Posterior vena cava (tissue), 2 donors: ENCODE measurements at regions of chr11 and their contacts with region 1.

Region 1: DNA sequence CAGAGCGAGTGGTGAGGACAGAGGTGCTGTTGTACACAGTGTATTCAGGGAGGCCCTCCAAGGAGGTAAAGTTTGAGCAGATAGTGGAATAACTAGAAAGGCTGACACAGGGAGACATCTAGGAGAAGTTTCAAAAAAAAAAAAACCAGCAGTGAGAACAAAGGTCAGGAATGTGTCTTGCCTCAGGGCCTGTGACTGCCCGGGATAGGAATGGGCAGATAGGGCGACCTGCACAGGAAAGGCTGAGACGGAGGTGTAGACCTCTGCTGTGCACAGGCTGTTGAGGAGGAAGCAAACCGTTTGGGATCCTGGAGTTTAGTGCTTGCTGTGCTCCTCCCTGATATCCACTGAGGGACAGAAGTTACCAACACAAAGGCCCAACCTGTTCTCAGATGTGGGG is 406.5 kb upstream of the B3GAT1 start:
- DNase-seq: no peak

Region 2: GRCh38 chr11:134762248-134763029 is 56.1 kb before region 1 on chr11:
- intact Hi-C with region 1: loop called in 1 of 2 experiments (anchors 1 kb)
- DNase-seq: no peak